HepG2 (cell line): ENCODE measurements at regions of chr16 and their contacts with region 1.

Region 1: DNA sequence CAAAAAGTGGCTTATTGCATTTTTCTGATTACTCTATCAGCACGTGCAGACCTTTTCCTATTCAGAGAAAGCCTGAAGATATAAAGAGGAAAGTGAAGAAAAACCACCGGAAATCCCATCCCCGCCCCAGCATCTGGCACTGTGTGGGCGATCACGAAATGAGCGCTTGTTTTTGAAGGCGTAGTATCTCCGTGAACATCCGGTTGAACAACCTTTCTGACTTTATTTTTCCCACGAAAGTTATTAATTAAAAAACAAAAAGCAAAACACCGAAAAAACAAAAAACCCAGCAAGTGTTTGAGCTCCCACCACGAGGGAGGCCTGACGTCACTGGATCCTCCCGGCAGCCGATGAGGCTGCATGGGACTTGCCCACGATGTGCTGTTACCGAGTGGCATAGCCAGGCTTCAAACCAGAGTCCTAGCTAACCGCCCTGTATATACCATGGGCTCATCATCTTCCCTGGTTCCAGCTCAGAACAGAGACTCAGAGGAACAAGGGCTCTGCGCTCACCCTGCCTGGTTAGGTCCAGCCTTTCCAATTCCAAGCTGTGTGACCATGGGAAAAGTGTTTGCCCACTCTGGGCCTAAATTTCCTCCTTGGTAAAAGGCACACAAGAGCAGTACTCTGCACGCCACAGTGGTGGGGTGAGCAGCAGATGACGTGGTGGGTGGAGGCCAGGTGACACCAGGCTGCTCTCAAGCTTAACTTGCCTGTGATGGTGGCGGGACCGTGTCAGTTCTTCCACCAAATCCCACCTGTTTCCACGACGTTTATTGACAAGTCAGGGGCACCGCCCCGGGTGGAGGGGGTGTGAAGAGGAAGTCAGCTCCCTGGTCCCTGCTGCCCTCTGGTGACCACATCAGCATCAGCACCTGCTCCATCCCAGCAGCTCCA is 34.3 kb upstream of the IL21R start:
- DNase-seq: peak; percentile 56
- ATAC-seq: peak; percentile 66
- H3K4me3 ChIP-seq: peak overlapping the region in 1 of 3 experiments; percentile 55; a peak in 2 of 6 replicates
- H3K27ac ChIP-seq: no peak overlapping the region
- H3K4me1 ChIP-seq: peaks cover 65% of the 10 kb centered on the region
- H3K27me3 ChIP-seq: no peaks in the 10 kb centered on the region
- CTCF ChIP-seq: peak; percentile 94
- EP300 ChIP-seq: 0 out of 4 replicates have a peak, but pooled peaks of 1 of the 2 experiments have one; percentile 18
- POLR2A ChIP-seq: no peak
- RAD21 ChIP-seq: peak; percentile 95

Region 2: GRCh38 chr16:27179500-27180072 is 188.1 kb before region 1 on chr16:
- CTCF ChIA-PET with region 1: interaction called, 25 read pairs
- POLR2A ChIA-PET with region 1: interaction called, 5 read pairs
- in situ Hi-C with region 1: loop called (anchors 5 kb)
- intact Hi-C with region 1: loop called (anchors 1 kb)
- DNase-seq: peak; percentile 72
- ATAC-seq: peak; percentile 93
- H3K4me3 ChIP-seq: no peak overlapping the region
- H3K27ac ChIP-seq: no peak overlapping the region
- H3K4me1 ChIP-seq: peaks cover 10% of the 10 kb centered on the region; the same call in 1 of the 2 replicates
- H3K27me3 ChIP-seq: peaks cover 0 to 6% of the 10 kb centered on the region in 2 experiments; a peak in 1 of 5 replicates
- CTCF ChIP-seq: peak; percentile 98
- EP300 ChIP-seq: no peak
- POLR2A ChIP-seq: no peak
- RAD21 ChIP-seq: peak; percentile 85

Region 3: DNA sequence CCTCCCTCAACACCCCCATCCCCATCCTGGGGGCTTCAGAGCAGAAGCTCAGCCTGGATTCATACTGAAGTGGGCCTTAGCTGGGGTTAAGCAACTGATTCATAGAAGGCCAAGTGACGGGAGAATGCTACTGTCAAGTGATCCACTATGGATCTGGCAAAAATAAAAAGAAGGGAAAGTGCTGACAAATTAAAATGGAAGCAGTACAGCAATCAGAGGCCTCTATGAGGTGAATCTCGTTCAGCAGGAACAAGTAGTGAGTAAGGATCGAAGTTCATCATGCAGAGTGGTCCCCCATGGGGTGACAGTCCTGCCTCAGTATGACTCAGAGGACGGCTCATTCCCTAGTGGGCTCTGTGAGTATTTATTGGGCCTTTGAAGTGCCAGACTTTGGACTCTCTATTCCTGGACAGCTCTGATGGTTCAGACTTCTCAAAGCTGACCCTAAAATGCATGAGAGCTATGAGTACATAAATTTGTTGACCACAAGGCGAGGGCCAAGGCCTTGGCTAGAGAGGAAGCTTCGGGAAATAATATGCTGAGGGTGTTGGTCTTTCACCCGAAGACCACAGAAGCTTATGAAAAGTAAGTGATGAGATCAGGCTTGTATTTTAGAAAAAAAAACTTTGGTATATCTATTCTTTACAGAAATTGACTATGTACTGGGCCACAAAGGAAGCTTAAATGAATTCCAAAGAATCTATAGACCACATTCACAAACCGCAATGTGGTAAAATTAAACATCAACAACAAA is 93.9 kb before region 1 on chr16:
- CTCF ChIA-PET with region 1: no interaction called
- POLR2A ChIA-PET with region 1: no interaction called
- in situ Hi-C with region 1: no loop called
- intact Hi-C with region 1: loop called (anchors 1 kb)
- DNase-seq: peak; percentile 100
- ATAC-seq: peak; percentile 98
- H3K4me3 ChIP-seq: peak overlapping the region; percentile 9 to 55 (median 24); a peak in 4 of 6 replicates
- H3K27ac ChIP-seq: peak overlapping the region; percentile 96
- H3K4me1 ChIP-seq: peaks cover 62% of the 10 kb centered on the region
- H3K27me3 ChIP-seq: no peaks in the 10 kb centered on the region
- CTCF ChIP-seq: peak; percentile 40; the same call in 1 of the 2 replicates
- EP300 ChIP-seq: peak; percentile 97 to 98
- POLR2A ChIP-seq: peak in 1 of 2 experiments; percentile 43; a peak in 1 of 4 replicates
- RAD21 ChIP-seq: peak; percentile 81

Region 4: GRCh38 chr16:27313422-27314160 is 54.1 kb before region 1 on chr16 and contains the start of gene IL4R:
- CTCF ChIA-PET with region 1: no interaction called
- POLR2A ChIA-PET with region 1: no interaction called
- in situ Hi-C with region 1: no loop called
- intact Hi-C with region 1: loop called (anchors 5 kb)
- DNase-seq: peak; percentile 94
- ATAC-seq: peak; percentile 84
- H3K4me3 ChIP-seq: peak within 1 kb of the TSS; percentile 88 to 99 (median 97)
- H3K27ac ChIP-seq: peak within 1 kb of the TSS; percentile 75
- H3K4me1 ChIP-seq: peaks cover 74% of the 10 kb centered on the region
- H3K27me3 ChIP-seq: peaks cover 1 to 17% of the 10 kb centered on the region in 2 experiments; a peak in 3 of 5 replicates
- CTCF ChIP-seq: no peak
- EP300 ChIP-seq: peak in 1 of 2 experiments; percentile 32; a peak in 1 of 4 replicates
- POLR2A ChIP-seq: peak; percentile 63 to 91
- RAD21 ChIP-seq: peak; percentile 23
- total RNA-seq, gene IL4R: 7.6 and 15.9 TPM in 2 replicates

Region 5: GRCh38 chr16:27326738-27327585 is 40.7 kb before region 1 on chr16:
- CTCF ChIA-PET with region 1: no interaction called
- POLR2A ChIA-PET with region 1: no interaction called
- in situ Hi-C with region 1: no loop called
- intact Hi-C with region 1: loop called (anchors 2 kb)
- DNase-seq: peak; percentile 81
- ATAC-seq: peak; percentile 78
- H3K4me3 ChIP-seq: peak overlapping the region; percentile 0 to 35 (median 22); a peak in 5 of 6 replicates
- H3K27ac ChIP-seq: peak overlapping the region; percentile 37
- H3K4me1 ChIP-seq: peaks cover 53% of the 10 kb centered on the region
- H3K27me3 ChIP-seq: no peaks in the 10 kb centered on the region
- CTCF ChIP-seq: peak; percentile 32
- EP300 ChIP-seq: peak in 1 of 2 experiments; percentile 9; a peak in 1 of 4 replicates
- POLR2A ChIP-seq: no peak
- RAD21 ChIP-seq: no peak